Heart right ventricle (tissue), 16 donors: ENCODE measurements at regions of chr11 and their contacts with region 1.

Region 1: GRCh38 chr11:111230122-111230465 is 15.4 kb upstream of the POU2AF2 start:
- DNase-seq: no peak
- ATAC-seq: peak in 7 of 8 donors; percentile 23 to 56 (median 39)
- H3K4me3 ChIP-seq: peak overlapping the region in 7 of 10 donors; percentile 38 to 62 (median 57)
- H3K27ac ChIP-seq: no peak overlapping the region
- H3K4me1 ChIP-seq: peaks cover 0 to 10% (median 3%) of the 10 kb centered on the region in 9 donors
- H3K27me3 ChIP-seq: peaks cover 0 to 8% (median 0%) of the 10 kb centered on the region in 7 donors
- CTCF ChIP-seq: no peak

Region 2: GRCh38 chr11:110447897-110448745 is 782.0 kb before region 1 on chr11:
- intact Hi-C with region 1: loop called in 4 of 10 experiments (anchors 5 to 10 kb)
- DNase-seq: no peak
- ATAC-seq: no peak
- H3K4me3 ChIP-seq: no peak overlapping the region
- H3K27ac ChIP-seq: no peak overlapping the region
- H3K4me1 ChIP-seq: peaks cover 0 to 11% (median 3%) of the 10 kb centered on the region in 9 donors
- H3K27me3 ChIP-seq: no peaks in the 10 kb centered on the region
- CTCF ChIP-seq: peak in 7 of 9 donors; percentile 25 to 55 (median 38)

Region 3: DNA sequence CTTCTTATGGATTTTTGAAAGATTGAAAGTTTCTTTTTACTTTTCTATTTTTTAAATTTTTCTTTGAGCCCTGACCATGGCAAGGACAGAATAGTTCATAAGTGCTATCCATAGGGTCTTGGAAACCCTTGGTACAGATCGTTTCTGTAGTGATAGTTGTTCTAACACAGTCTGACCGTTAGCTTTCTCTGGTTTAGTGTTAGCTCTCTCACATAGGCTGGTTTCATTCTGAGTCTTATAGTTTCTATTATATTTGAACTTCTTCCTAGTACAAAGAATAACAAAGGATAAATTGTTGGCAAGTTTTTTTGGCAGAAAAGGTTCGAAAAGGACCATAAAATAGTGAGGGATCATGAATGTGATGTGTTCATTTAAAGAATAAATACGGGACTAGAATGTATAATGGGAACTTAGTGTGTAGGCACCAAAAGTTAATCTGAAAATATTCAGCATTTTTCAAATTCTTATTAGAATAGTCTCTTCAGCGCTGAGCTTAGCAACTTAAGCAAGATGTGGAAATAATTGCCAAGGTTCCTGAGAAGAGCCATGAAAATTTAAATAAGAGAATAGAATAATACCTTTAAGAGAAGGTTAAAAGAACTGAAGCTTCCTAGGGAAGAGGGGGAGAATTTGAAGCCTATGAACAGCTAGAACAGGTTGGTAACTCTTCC is 776.3 kb before region 1 on chr11:
- intact Hi-C with region 1: loop called in 4 of 10 experiments (anchors 5 to 10 kb)
- DNase-seq: no peak
- ATAC-seq: no peak
- H3K4me3 ChIP-seq: no peak overlapping the region
- H3K27ac ChIP-seq: no peak overlapping the region
- H3K4me1 ChIP-seq: peaks cover 0 to 4% (median 0%) of the 10 kb centered on the region in 9 donors
- H3K27me3 ChIP-seq: no peaks in the 10 kb centered on the region
- CTCF ChIP-seq: no peak

Region 4: DNA sequence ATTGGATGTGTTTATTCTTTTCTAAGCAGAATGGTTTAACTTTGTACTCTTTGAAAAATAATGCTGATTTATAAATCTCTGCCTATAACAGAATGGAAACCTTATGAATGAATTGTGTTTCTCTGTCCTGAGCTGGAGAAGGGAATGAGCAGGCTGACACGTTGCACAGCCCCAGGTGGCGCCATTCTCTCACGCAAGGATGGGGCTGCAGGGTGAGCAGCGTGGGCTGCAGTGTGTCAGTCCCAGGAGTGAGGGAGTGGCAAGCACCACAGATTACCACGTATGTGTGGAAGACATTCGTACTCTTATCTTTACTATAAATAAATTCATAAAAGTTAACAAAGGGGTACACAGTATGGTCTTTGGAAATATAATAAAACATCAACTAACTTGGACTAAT is 766.9 kb before region 1 on chr11:
- intact Hi-C with region 1: loop called in 6 of 10 experiments (anchors 5 to 10 kb)
- DNase-seq: peak; percentile 14 to 38
- ATAC-seq: peak in 7 of 8 donors; percentile 67 to 79 (median 75)
- H3K4me3 ChIP-seq: no peak overlapping the region
- H3K27ac ChIP-seq: no peak overlapping the region
- H3K4me1 ChIP-seq: no peaks in the 10 kb centered on the region
- H3K27me3 ChIP-seq: no peaks in the 10 kb centered on the region
- CTCF ChIP-seq: peak in 8 of 9 donors; percentile 17 to 61 (median 52)

Region 5: GRCh38 chr11:111148953-111149352 is 81.1 kb before region 1 on chr11:
- intact Hi-C with region 1: no loop called
- DNase-seq: no peak
- ATAC-seq: peak in 1 of 8 donors; percentile 56
- H3K4me3 ChIP-seq: no peak overlapping the region
- H3K27ac ChIP-seq: no peak overlapping the region
- H3K4me1 ChIP-seq: peaks cover 0 to 5% (median 0%) of the 10 kb centered on the region in 9 donors
- H3K27me3 ChIP-seq: peaks cover 0 to 5% (median 0%) of the 10 kb centered on the region in 7 donors
- CTCF ChIP-seq: no peak